ENCODE measurements at regions of chr14 and their contacts with region 1.

Region 1: GRCh38 chr14:35121887-35122695 is at the starts of genes PPP2R3C and PRORP:
- DNase-seq: peak; percentile 91 to 94 (median 92)
- ATAC-seq: peak; percentile 95 to 97 (median 96)
- H3K4me3 ChIP-seq: peak within 1 kb of the TSS; percentile 55 to 86 (median 68)
- H3K27ac ChIP-seq: peak within 1 kb of the TSS; percentile 91 to 100 (median 96)
- H3K4me1 ChIP-seq: peaks cover 0 to 53% (median 18%) of the 10 kb centered on the region in 12 donors
- H3K27me3 ChIP-seq: no peaks in the 10 kb centered on the region
- CTCF ChIP-seq: no peak
- POLR2A ChIP-seq: peak in 1 of 2 donors; percentile 60
- total RNA-seq, gene PPP2R3C: 15.2 to 37.3 (median 28.5) TPM
- total RNA-seq, gene PRORP: 18.0 to 25.8 (median 21.1) TPM

Region 2: GRCh38 chr14:34982417-34983147 is 139.5 kb before region 1 on chr14 and contains the start of gene SRP54:
- intact Hi-C with region 1: loop called in 2 of 10 experiments (anchors 2 to 5 kb)
- DNase-seq: peak; percentile 98 to 99 (median 99)
- ATAC-seq: peak; percentile 97 to 99 (median 97)
- H3K4me3 ChIP-seq: peak within 1 kb of the TSS; percentile 66 to 99 (median 86)
- H3K27ac ChIP-seq: peak within 1 kb of the TSS; percentile 90 to 100 (median 96)
- H3K4me1 ChIP-seq: peaks cover 7 to 44% (median 29%) of the 10 kb centered on the region in 12 donors
- H3K27me3 ChIP-seq: no peaks in the 10 kb centered on the region
- CTCF ChIP-seq: peak in 4 of 12 donors; percentile 3 to 21 (median 9)
- POLR2A ChIP-seq: peak in 1 of 2 donors; percentile 83
- total RNA-seq, gene SRP54: 29.0 to 37.3 (median 34.0) TPM

Region 3: GRCh38 chr14:34997762-34998161 is 124.3 kb before region 1 on chr14:
- intact Hi-C with region 1: no loop called
- DNase-seq: no peak
- ATAC-seq: no peak
- H3K4me3 ChIP-seq: no peak overlapping the region
- H3K27ac ChIP-seq: no peak overlapping the region
- H3K4me1 ChIP-seq: peaks cover 0 to 10% (median 0%) of the 10 kb centered on the region in 12 donors
- H3K27me3 ChIP-seq: no peaks in the 10 kb centered on the region
- CTCF ChIP-seq: no peak
- POLR2A ChIP-seq: no peak

Region 4: DNA sequence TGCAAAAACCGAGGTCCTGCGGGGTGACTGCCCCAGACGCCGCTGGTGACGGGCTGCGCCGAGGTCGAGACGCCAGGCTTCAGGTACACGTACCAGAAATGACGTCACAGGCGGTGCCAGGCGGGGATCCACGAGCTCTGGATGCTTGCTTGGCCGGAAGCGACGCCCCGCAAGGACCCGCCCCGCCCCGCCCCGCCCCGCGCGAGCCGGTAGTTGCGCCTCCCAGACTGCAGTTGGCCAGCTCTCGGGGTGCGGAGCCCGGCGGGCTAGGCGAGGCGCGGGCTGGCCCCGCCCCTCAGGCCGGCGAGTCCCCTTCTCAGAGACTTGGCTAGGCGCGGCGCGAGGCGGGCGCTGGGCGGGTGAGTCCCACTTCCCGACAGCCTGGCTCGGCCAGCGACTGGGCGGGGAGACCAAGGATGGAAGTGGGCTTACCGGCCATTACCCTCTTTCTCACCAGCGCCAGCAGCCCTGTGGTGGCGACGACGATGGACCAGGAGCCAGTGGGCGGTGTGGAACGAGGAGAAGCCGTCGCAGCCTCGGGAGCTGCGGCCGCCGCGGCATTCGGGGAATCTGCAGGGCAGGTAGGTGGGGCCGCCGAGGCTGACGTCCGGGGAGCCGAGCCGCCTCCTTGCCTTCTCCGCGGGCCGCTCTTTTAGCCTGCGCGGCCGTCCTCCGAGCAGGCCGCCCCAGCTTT is 75.9 kb before region 1 on chr14 and contains the start of gene FAM177A1:
- intact Hi-C with region 1: loop called in 4 of 10 experiments (anchors 1 to 5 kb)
- DNase-seq: peak; percentile 97 to 99 (median 99)
- ATAC-seq: peak; percentile 96 to 98 (median 98)
- H3K4me3 ChIP-seq: peak within 1 kb of the TSS; percentile 62 to 95 (median 84)
- H3K27ac ChIP-seq: peak within 1 kb of the TSS; percentile 91 to 99 (median 96)
- H3K4me1 ChIP-seq: peaks cover 0 to 43% (median 27%) of the 10 kb centered on the region in 12 donors
- H3K27me3 ChIP-seq: no peaks in the 10 kb centered on the region
- CTCF ChIP-seq: no peak
- POLR2A ChIP-seq: peak; percentile 74 to 96
- total RNA-seq, gene FAM177A1: 56.3 to 129 (median 98.8) TPM

Region 5: GRCh38 chr14:35808076-35808652 is 686.1 kb after region 1 on chr14:
- intact Hi-C with region 1: loop called in 1 of 10 experiments (anchors 5 kb)
- DNase-seq: no peak
- ATAC-seq: peak in 2 of 4 donors; percentile 19 to 51
- H3K4me3 ChIP-seq: peak overlapping the region; percentile 66 to 91 (median 78)
- H3K27ac ChIP-seq: peak overlapping the region; percentile 89 to 95 (median 92)
- H3K4me1 ChIP-seq: peaks cover 0 to 36% (median 16%) of the 10 kb centered on the region in 12 donors
- H3K27me3 ChIP-seq: no peaks in the 10 kb centered on the region
- CTCF ChIP-seq: no peak
- POLR2A ChIP-seq: no peak